ENCODE measurements at regions of chr6 and their contacts with region 1.

Region 1: DNA sequence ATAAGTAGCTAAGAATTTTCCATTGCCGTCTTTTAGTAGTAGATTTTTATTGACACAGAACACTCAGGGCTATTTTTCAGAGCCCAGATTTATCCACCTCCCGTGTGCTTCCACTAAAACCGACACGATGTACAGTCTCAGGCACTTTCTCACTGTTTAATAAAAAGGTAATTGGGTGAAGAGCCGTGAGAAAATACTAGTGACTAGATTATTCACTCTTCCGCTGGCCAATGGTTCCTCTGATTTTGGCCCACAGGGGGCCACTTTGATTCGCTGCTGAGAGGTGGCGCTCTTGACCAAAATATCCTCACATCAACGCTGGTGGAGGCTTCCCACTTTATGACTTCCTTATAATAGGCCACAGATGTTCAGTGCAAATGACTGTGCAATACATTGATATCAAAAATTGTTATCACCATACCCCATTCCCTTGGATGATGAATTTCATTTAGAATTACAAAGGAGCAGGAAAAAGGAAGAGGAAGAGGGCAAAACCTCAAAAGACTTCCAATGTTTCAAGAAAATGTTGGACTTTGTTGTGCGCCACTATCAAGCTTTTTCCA is 12.3 kb upstream of the HDDC2 start:
- DNase-seq: peak; percentile 57
- ATAC-seq: peak; percentile 90

Region 2: GRCh38 chr6:124977067-124977908 is 336.8 kb before region 1 on chr6:
- intact Hi-C with region 1: no loop called
- DNase-seq: no peak
- ATAC-seq: no peak

Region 3: GRCh38 chr6:125753218-125753936 is 439.3 kb after region 1 on chr6:
- intact Hi-C with region 1: loop called (anchors 5 kb)
- DNase-seq: no peak
- ATAC-seq: no peak

Region 4: GRCh38 chr6:125769147-125769783 is 455.2 kb after region 1 on chr6:
- intact Hi-C with region 1: loop called (anchors 2 kb)
- DNase-seq: no peak
- ATAC-seq: no peak